ENCODE measurements at regions of chr1 and their contacts with region 1.

Region 1: GRCh38 chr1:218851586-218851985 is 322.1 kb upstream of the LYPLAL1 start:
- DNase-seq: no peak
- ATAC-seq: no peak

Region 2: DNA sequence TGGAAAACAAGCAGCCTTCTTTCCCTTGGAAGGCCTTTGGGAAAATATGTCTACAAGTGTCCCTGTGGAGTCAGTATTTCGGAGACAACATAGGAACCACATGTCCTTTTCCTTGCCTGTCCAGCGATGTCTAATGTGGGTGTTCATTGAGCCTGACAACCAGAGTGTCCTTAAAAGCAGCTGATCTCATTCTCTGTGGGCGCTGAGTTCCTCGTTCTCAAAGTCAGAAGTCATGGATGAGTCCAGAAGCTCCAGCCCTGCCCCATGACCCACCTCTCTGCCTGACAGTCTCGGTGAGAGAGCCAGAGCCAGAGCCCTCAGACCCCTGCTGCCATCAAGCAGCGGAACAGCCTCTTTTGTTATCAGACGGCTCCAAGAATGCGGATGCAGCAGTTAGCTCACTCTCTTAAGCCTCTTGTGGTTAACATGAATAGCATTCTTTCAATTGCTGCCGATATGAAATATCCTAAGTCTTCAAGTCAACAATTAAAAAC is 177.3 kb before region 1 on chr1:
- intact Hi-C with region 1: loop called (anchors 10 kb)
- DNase-seq: peak; percentile 47
- ATAC-seq: peak; percentile 69

Region 3: DNA sequence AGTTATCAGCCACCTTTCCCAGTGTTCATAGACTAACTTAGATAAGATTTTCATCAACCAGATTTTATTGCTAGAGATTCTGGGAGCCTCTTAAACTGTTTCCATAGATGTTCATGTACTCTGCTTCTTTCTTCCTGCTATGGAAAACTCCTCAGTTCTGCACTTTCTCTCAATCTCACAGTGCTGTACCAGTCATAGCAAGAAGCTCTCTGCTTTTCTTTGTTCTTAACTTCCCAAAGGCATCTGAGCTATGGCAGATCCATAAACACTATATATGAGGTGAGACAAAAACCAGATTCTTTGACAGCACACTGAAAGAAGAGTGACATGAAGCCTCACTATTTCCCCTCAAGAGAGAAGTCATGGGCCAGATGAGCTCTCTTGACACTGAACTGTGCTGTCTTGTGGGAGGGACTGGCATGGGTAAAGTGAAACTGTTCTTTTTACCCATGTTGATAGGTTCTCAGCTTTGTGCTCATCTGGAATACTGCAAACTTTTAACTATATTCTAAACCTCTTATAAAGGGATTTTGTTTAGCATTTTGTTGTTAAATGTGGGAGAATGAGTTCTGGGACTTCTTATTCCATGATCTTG is 257.9 kb after region 1 on chr1:
- intact Hi-C with region 1: no loop called
- DNase-seq: no peak
- ATAC-seq: no peak

Region 4: DNA sequence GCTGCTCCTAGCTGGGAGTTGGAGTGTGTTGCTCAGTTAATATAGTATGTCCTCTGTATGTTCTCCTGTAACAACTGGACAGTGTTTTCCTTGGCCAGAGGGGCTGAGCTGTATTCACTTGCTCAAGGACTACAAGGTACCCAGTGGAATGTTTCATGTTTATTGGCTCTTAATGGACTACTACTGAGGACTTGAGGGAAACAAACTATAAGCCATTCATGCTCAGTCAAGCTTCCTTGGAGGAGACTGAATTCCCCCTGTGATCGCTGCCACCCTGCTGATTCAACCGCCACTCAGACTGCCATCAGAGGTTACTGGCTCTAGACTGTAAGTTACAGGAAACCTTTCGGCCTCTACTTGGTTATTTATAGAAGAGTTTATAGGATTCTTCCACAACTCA is 594.7 kb after region 1 on chr1:
- intact Hi-C with region 1: no loop called
- DNase-seq: no peak
- ATAC-seq: peak; percentile 43